ENCODE measurements at regions of chr20 and their contacts with region 1.

Region 1: GRCh38 chr20:8722276-8722928 is 346.5 kb upstream of the PLCB4 start:
- DNase-seq: peak; percentile 13
- H3K4me3 Mint-ChIP-seq: no peak overlapping the region
- H3K27ac Mint-ChIP-seq: no peak overlapping the region
- H3K4me1 Mint-ChIP-seq: no peaks in the 10 kb centered on the region
- H3K27me3 Mint-ChIP-seq: no peaks in the 10 kb centered on the region

Region 2: GRCh38 chr20:7935027-7935551 is 787.3 kb before region 1 on chr20:
- CTCF ChIA-PET with region 1: interaction called, 151 read pairs
- POLR2A ChIA-PET with region 1: interaction called, 5 read pairs
- intact Hi-C with region 1: loop called (anchors 1 kb)
- DNase-seq: no peak
- H3K4me3 Mint-ChIP-seq: no peak overlapping the region
- H3K27ac Mint-ChIP-seq: no peak overlapping the region
- H3K4me1 Mint-ChIP-seq: no peaks in the 10 kb centered on the region
- H3K27me3 Mint-ChIP-seq: peaks cover 11% of the 10 kb centered on the region

Region 3: GRCh38 chr20:8043687-8044282 is 678.6 kb before region 1 on chr20:
- CTCF ChIA-PET with region 1: interaction called, 101 read pairs
- POLR2A ChIA-PET with region 1: interaction called, 7 read pairs
- intact Hi-C with region 1: loop called (anchors 1 kb)
- DNase-seq: no peak
- H3K4me3 Mint-ChIP-seq: no peak overlapping the region
- H3K27ac Mint-ChIP-seq: no peak overlapping the region
- H3K4me1 Mint-ChIP-seq: peaks cover 2% of the 10 kb centered on the region
- H3K27me3 Mint-ChIP-seq: peaks cover 11% of the 10 kb centered on the region

Region 4: GRCh38 chr20:8305449-8305978 is 416.9 kb before region 1 on chr20:
- CTCF ChIA-PET with region 1: interaction called, 6 read pairs
- POLR2A ChIA-PET with region 1: no interaction called
- intact Hi-C with region 1: loop called (anchors 5 kb)
- DNase-seq: peak; percentile 75
- H3K4me3 Mint-ChIP-seq: no peak overlapping the region
- H3K27ac Mint-ChIP-seq: no peak overlapping the region
- H3K4me1 Mint-ChIP-seq: peaks cover 6% of the 10 kb centered on the region
- H3K27me3 Mint-ChIP-seq: no peaks in the 10 kb centered on the region

Region 5: DNA sequence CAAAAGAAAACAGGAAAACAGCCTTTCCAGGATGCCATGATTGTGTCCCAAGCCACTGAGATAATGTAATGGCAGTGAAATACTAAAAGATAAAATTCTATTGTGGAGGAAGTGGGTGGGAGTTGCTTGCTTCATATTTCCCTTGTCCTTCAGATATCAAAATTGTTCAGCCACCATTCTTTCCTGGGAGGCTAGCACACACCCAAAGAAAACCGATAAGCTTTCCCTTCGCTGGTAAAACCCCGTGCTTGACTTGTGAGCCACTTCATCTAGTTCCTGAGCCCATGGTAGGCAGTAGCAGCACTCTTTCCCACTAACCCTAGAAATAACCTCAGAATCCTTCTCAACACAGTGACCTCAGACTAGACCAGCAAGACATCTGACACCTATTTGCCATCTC is 10.9 kb before region 1 on chr20:
- CTCF ChIA-PET with region 1: interaction called, 25 read pairs
- POLR2A ChIA-PET with region 1: no interaction called
- intact Hi-C with region 1: no loop called
- DNase-seq: no peak
- H3K4me3 Mint-ChIP-seq: no peak overlapping the region
- H3K27ac Mint-ChIP-seq: no peak overlapping the region
- H3K4me1 Mint-ChIP-seq: no peaks in the 10 kb centered on the region
- H3K27me3 Mint-ChIP-seq: no peaks in the 10 kb centered on the region

Region 6: DNA sequence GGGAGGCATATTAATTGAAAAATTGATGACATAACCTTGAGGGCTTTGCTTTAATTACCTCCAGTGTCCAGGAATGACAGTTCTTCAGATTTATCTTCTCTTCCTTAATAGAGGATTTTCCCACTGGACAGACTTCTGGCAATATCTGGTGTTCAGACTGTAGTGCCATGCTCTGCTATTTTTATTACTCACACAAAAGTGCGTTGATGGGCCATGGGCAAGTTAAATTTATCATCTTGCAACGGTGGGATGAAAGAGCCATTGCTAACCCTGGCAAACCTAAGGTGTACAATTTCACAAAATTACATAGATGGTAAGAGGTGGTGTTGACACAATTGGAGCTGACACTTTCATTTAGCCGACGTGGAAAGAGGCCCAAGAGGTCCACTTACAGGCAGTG is 92.8 kb after region 1 on chr20:
- CTCF ChIA-PET with region 1: no interaction called
- POLR2A ChIA-PET with region 1: no interaction called
- intact Hi-C with region 1: no loop called
- DNase-seq: no peak
- H3K4me3 Mint-ChIP-seq: no peak overlapping the region
- H3K27ac Mint-ChIP-seq: no peak overlapping the region
- H3K4me1 Mint-ChIP-seq: no peaks in the 10 kb centered on the region
- H3K27me3 Mint-ChIP-seq: no peaks in the 10 kb centered on the region